ENCODE measurements at regions of chr20 and their contacts with region 1.

Region 1: GRCh38 chr20:58650776-58651558 is at the start of gene STX16:
- DNase-seq: peak; percentile 95
- H3K4me3 Mint-ChIP-seq: peak within 1 kb of the TSS; percentile 96
- H3K27ac Mint-ChIP-seq: peak within 1 kb of the TSS; percentile 99
- H3K4me1 Mint-ChIP-seq: peaks cover 17% of the 10 kb centered on the region
- H3K27me3 Mint-ChIP-seq: no peaks in the 10 kb centered on the region
- CTCF ChIP-seq: peak; percentile 29
- total RNA-seq, gene STX16: 93.3 and 108 TPM in 2 replicates

Region 2: GRCh38 chr20:58251921-58252591 is 398.9 kb before region 1 on chr20:
- CTCF ChIA-PET with region 1: interaction called, 3 read pairs
- POLR2A ChIA-PET with region 1: interaction called, 11 read pairs
- intact Hi-C with region 1: no loop called
- DNase-seq: peak; percentile 91
- H3K4me3 Mint-ChIP-seq: no peak overlapping the region
- H3K27ac Mint-ChIP-seq: peak overlapping the region; percentile 88
- H3K4me1 Mint-ChIP-seq: peaks cover 7% of the 10 kb centered on the region
- H3K27me3 Mint-ChIP-seq: no peaks in the 10 kb centered on the region
- CTCF ChIP-seq: no peak

Region 3: DNA sequence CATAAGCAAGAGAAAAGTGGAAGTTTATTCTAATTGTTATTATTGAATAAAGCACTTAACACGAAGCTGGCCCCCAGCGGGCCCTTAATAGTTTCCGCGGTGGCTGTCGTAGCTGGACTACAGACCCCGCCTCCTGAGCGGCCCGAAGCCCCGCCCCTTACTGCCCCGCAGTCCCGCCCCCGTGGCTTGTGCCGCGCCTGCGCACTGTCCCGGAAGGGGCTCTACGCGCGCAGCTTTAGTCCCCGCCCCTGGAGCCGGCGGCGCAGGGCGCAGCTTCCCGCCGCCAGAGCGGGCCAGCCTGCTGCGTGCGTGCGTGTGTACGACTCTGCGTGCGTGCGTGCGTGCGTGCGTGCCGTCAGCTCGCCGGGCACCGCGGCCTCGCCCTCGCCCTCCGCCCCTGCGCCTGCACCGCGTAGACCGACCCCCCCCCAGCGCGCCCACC is 262.1 kb before region 1 on chr20 and contains the start of gene VAPB:
- CTCF ChIA-PET with region 1: interaction called, 3 read pairs
- POLR2A ChIA-PET with region 1: interaction called, 57 read pairs
- intact Hi-C with region 1: no loop called
- DNase-seq: peak; percentile 94
- H3K4me3 Mint-ChIP-seq: peak within 1 kb of the TSS; percentile 75
- H3K27ac Mint-ChIP-seq: peak within 1 kb of the TSS; percentile 73
- H3K4me1 Mint-ChIP-seq: peaks cover 30% of the 10 kb centered on the region
- H3K27me3 Mint-ChIP-seq: no peaks in the 10 kb centered on the region
- CTCF ChIP-seq: no peak
- total RNA-seq, gene VAPB: 60.4 and 61.2 TPM in 2 replicates

Region 4: GRCh38 chr20:58458180-58459057 is 192.5 kb before region 1 on chr20:
- CTCF ChIA-PET with region 1: interaction called, 3 read pairs
- POLR2A ChIA-PET with region 1: interaction called, 16 read pairs
- intact Hi-C with region 1: no loop called
- DNase-seq: no peak
- H3K4me3 Mint-ChIP-seq: no peak overlapping the region
- H3K27ac Mint-ChIP-seq: no peak overlapping the region
- H3K4me1 Mint-ChIP-seq: peaks cover 8% of the 10 kb centered on the region
- H3K27me3 Mint-ChIP-seq: no peaks in the 10 kb centered on the region
- CTCF ChIP-seq: no peak

Region 5: DNA sequence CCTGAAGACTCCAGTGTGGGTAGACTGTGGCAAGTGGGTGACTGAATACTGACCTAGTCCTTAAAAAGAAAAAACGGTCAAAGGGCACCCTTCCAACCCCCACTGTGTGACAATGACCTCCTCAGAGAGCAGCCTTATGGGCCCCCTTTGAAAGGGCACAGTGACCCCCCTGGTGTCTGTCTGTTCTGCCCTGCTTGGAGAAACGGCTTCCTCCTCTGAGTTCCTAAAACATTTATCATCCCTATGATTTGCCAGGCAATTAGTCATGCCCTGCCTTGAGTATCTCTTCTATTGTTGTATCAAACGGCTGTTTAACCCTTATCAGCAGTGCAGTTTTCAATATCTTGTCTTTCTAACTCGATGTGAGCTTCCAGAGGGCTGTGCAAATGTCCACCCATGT is 20.9 kb before region 1 on chr20:
- CTCF ChIA-PET with region 1: interaction called, 4 read pairs
- POLR2A ChIA-PET with region 1: interaction called, 14 read pairs
- intact Hi-C with region 1: no loop called
- DNase-seq: peak; percentile 42
- H3K4me3 Mint-ChIP-seq: no peak overlapping the region
- H3K27ac Mint-ChIP-seq: peak overlapping the region; percentile 63
- H3K4me1 Mint-ChIP-seq: peaks cover 19% of the 10 kb centered on the region
- H3K27me3 Mint-ChIP-seq: no peaks in the 10 kb centered on the region
- CTCF ChIP-seq: no peak

Region 6: GRCh38 chr20:58664883-58665282 is 13.9 kb after region 1 on chr20:
- CTCF ChIA-PET with region 1: interaction called, 8 read pairs
- POLR2A ChIA-PET with region 1: interaction called, 33 read pairs
- intact Hi-C with region 1: no loop called
- DNase-seq: no peak
- H3K4me3 Mint-ChIP-seq: no peak overlapping the region
- H3K27ac Mint-ChIP-seq: peak overlapping the region; percentile 16
- H3K4me1 Mint-ChIP-seq: no peaks in the 10 kb centered on the region
- H3K27me3 Mint-ChIP-seq: no peaks in the 10 kb centered on the region
- CTCF ChIP-seq: no peak

Region 7: GRCh38 chr20:59032023-59032712 is 381.2 kb after region 1 on chr20 and contains the start of gene ATP5F1E:
- CTCF ChIA-PET with region 1: no interaction called
- POLR2A ChIA-PET with region 1: interaction called, 25 read pairs
- intact Hi-C with region 1: no loop called
- DNase-seq: peak; percentile 93
- H3K4me3 Mint-ChIP-seq: peak within 1 kb of the TSS; percentile 90
- H3K27ac Mint-ChIP-seq: peak within 1 kb of the TSS; percentile 78
- H3K4me1 Mint-ChIP-seq: peaks cover 33% of the 10 kb centered on the region
- H3K27me3 Mint-ChIP-seq: no peaks in the 10 kb centered on the region
- CTCF ChIP-seq: no peak
- total RNA-seq, gene ATP5F1E: 65.2 and 69.7 TPM in 2 replicates

Region 8: DNA sequence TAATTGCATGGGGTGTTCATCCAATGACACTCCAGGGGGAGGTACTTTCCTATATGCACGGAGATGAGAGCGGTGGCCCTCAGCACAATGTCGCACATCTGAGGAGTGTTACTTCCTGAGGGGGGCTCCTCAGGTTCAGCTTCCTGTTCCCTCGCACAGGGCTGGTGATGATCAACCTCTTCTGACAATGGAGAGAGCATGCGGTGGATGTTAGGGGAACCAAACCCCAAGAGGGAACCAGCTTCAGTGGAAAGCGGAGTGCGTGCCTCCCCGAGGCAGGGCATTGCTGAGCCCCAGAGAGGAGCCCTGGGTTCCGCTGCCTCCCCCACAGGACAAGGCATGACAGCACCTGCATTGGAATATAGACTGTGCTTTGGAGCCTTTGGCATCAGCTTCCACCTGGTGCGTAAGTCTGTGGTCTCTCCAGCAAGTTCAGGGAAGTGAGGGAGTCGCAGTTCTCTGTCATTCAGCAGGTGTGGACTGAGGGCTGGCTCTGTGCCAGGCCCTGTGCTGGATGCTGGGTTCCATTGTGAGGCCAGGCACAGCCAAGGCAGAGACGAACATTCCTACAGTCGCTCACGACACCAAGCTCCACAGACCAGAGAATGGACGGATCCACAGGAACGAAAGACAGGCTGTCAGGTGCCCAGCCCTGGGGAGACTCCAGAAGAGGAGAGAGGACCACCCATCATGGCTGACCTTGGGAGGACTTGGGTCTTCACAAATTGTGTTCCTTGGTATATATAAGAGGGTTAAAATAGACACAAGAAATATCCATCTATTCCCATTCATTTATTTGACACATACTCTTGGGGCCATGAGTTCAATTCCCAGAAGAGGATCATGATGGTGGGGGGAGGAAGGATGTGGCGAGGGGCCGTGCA is 508.8 kb after region 1 on chr20:
- CTCF ChIA-PET with region 1: no interaction called
- POLR2A ChIA-PET with region 1: no interaction called
- intact Hi-C with region 1: no loop called
- DNase-seq: peak; percentile 7
- H3K4me3 Mint-ChIP-seq: no peak overlapping the region
- H3K27ac Mint-ChIP-seq: no peak overlapping the region
- H3K4me1 Mint-ChIP-seq: peaks cover 3% of the 10 kb centered on the region
- H3K27me3 Mint-ChIP-seq: peaks cover 85% of the 10 kb centered on the region
- CTCF ChIP-seq: no peak